CD8-positive, alpha-beta T cell (primary cell): ENCODE measurements at regions of chr3 and their contacts with region 1.

Region 1: DNA sequence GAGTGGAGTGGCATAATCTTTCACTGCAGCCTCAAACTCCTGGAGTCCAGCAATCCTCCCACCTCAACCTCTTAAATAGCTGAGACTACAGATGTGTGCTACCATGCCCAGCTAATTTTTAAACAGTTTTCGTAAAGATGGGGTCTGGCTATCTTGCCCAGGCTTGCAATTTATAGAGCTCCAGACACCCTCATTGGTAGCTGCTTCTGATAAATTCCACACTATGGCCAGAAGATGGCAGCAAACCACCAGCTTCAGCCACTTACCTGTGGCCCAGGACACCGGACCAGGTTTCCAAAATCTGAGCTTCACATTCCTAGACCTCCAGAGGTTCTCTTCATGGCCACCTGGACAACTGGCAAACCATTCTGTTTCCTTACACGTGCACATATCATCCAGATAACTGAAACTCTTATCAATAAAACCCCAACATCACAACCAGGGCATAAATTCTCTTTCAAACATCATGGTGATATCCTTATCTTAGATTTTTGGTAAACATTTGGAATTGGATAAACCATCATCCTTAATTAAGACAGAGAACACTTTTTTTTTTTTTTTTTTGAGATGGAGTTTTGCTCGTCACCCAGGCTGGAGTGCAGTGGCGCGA is 28.9 kb downstream of the FBXW12 start:
- DNase-seq: peak; percentile 29 to 87 (median 64)
- ATAC-seq: peak; percentile 90
- H3K4me3 ChIP-seq: no peak overlapping the region
- H3K4me3 Mint-ChIP-seq: no peak overlapping the region
- H3K27ac ChIP-seq: no peak overlapping the region
- H3K27ac Mint-ChIP-seq: no peak overlapping the region
- H3K4me1 ChIP-seq: no peaks in the 10 kb centered on the region
- H3K4me1 Mint-ChIP-seq: no peaks in the 10 kb centered on the region
- H3K27me3 ChIP-seq: no peaks in the 10 kb centered on the region
- H3K27me3 Mint-ChIP-seq: peaks cover 3% of the 10 kb centered on the region
- CTCF ChIP-seq: peak; percentile 87

Region 2: GRCh38 chr3:47433796-47434195 is 967.1 kb before region 1 on chr3:
- CTCF ChIA-PET with region 1: no interaction called
- POLR2A ChIA-PET with region 1: no interaction called
- intact Hi-C with region 1: no loop called
- DNase-seq: no peak
- ATAC-seq: no peak
- H3K4me3 ChIP-seq: no peak overlapping the region
- H3K4me3 Mint-ChIP-seq: no peak overlapping the region
- H3K27ac ChIP-seq: no peak overlapping the region
- H3K27ac Mint-ChIP-seq: no peak overlapping the region
- H3K4me1 ChIP-seq: no peaks in the 10 kb centered on the region
- H3K4me1 Mint-ChIP-seq: no peaks in the 10 kb centered on the region
- H3K27me3 ChIP-seq: no peaks in the 10 kb centered on the region
- H3K27me3 Mint-ChIP-seq: no peaks in the 10 kb centered on the region
- CTCF ChIP-seq: no peak

Region 3: DNA sequence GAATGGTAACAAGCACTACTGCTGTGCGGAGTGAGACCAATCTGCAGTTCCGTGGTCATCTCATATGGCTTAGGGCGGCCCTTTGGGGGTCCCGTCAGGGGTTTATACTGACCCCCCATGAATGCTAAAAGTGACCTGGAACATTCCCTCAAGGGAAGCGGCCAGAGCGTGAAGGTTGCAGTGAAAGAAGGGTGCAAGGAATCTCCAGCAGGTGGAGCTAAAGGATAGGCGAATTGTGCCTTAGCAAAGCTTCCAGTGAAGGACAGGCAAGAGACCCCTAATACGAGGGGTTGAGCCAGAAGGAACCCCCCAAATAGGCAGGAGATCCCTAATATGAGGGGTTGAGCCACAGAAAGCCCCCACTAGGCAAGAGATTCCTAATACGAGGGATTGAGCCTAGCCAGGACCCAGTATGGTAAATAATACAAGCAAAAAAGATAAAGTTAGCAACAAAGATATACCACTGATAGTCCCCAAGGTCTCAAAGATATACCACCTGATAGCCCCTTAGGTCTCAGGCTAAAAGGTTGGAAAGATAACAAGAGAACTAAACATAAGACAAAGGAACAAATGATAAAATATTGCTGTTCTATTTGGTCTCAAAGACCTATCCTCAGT is 127.2 kb before region 1 on chr3:
- CTCF ChIA-PET with region 1: interaction called, 14 read pairs
- POLR2A ChIA-PET with region 1: no interaction called
- intact Hi-C with region 1: loop called (anchors 1 kb)
- DNase-seq: peak in 8 of 9 experiments; percentile 5 to 78 (median 58)
- ATAC-seq: peak; percentile 50
- H3K4me3 ChIP-seq: no peak overlapping the region
- H3K4me3 Mint-ChIP-seq: no peak overlapping the region
- H3K27ac ChIP-seq: no peak overlapping the region
- H3K27ac Mint-ChIP-seq: no peak overlapping the region
- H3K4me1 ChIP-seq: peaks cover 7% of the 10 kb centered on the region
- H3K4me1 Mint-ChIP-seq: peaks cover 20% of the 10 kb centered on the region
- H3K27me3 ChIP-seq: no peaks in the 10 kb centered on the region
- H3K27me3 Mint-ChIP-seq: no peaks in the 10 kb centered on the region
- CTCF ChIP-seq: peak; percentile 75

Region 4: GRCh38 chr3:48415554-48415953 is 14.6 kb after region 1 on chr3:
- CTCF ChIA-PET with region 1: interaction called, 22 read pairs
- POLR2A ChIA-PET with region 1: no interaction called
- intact Hi-C with region 1: no loop called
- DNase-seq: no peak
- ATAC-seq: no peak
- H3K4me3 ChIP-seq: no peak overlapping the region
- H3K4me3 Mint-ChIP-seq: no peak overlapping the region
- H3K27ac ChIP-seq: no peak overlapping the region
- H3K27ac Mint-ChIP-seq: no peak overlapping the region
- H3K4me1 ChIP-seq: no peaks in the 10 kb centered on the region
- H3K4me1 Mint-ChIP-seq: no peaks in the 10 kb centered on the region
- H3K27me3 ChIP-seq: no peaks in the 10 kb centered on the region
- H3K27me3 Mint-ChIP-seq: no peaks in the 10 kb centered on the region
- CTCF ChIP-seq: no peak

Region 5: GRCh38 chr3:48472915-48473616 is 72.1 kb after region 1 on chr3:
- CTCF ChIA-PET with region 1: interaction called, 14 read pairs
- POLR2A ChIA-PET with region 1: no interaction called
- intact Hi-C with region 1: no loop called
- DNase-seq: peak; percentile 85 to 99 (median 92)
- ATAC-seq: peak; percentile 87
- H3K4me3 ChIP-seq: peak overlapping the region; percentile 62 to 65
- H3K4me3 Mint-ChIP-seq: peak overlapping the region; percentile 90
- H3K27ac ChIP-seq: peak overlapping the region; percentile 82 to 92
- H3K27ac Mint-ChIP-seq: peak overlapping the region; percentile 99
- H3K4me1 ChIP-seq: peaks cover 55% of the 10 kb centered on the region
- H3K4me1 Mint-ChIP-seq: peaks cover 56% of the 10 kb centered on the region
- H3K27me3 ChIP-seq: no peaks in the 10 kb centered on the region
- H3K27me3 Mint-ChIP-seq: no peaks in the 10 kb centered on the region
- CTCF ChIP-seq: no peak

Region 6: DNA sequence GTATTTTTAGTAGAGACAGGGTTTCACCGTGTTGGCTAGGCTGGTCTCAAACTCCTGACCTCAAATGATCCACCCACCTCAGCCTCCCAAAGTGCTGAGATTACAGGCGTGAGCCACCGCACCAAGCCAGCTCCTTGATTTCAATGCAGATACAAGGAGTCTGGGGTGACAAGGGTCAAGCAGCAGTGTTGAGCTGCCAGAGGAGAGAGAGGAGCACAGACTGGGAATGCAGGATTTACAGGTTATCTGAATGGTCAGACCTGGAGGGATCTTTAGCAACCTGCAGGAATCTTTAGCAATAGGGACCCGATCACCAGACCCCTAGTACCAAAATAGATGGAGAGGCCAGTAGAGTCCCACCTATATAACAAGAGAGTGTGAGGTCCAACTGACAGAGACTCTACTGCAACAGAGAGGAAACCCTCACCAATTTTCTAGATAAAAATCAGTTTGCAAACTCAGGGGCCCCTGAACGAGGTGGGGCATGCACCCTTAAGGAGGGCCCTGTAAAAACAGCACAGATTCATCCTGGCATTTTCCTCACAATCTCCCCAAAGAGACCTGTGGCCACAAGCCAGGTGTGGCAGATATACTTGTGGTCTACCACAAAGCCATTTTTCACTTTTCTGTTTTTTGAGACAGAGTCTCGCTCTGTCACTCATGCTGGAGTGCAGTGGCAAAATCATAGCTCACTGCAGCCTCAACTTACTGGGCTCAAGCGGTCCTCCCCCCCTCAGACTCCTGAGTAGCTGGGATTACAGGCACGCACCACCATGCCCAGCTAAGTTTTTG is 113.7 kb after region 1 on chr3:
- CTCF ChIA-PET with region 1: interaction called, 60 read pairs
- POLR2A ChIA-PET with region 1: no interaction called
- intact Hi-C with region 1: no loop called
- DNase-seq: peak in 6 of 9 experiments; percentile 28 to 67 (median 42)
- ATAC-seq: peak; percentile 40
- H3K4me3 ChIP-seq: peak overlapping the region in 1 of 2 experiments; percentile 13
- H3K4me3 Mint-ChIP-seq: peak overlapping the region; percentile 63
- H3K27ac ChIP-seq: no peak overlapping the region
- H3K27ac Mint-ChIP-seq: peak overlapping the region; percentile 62
- H3K4me1 ChIP-seq: peaks cover 59% of the 10 kb centered on the region
- H3K4me1 Mint-ChIP-seq: peaks cover 61% of the 10 kb centered on the region
- H3K27me3 ChIP-seq: no peaks in the 10 kb centered on the region
- H3K27me3 Mint-ChIP-seq: no peaks in the 10 kb centered on the region
- CTCF ChIP-seq: no peak

Region 7: GRCh38 chr3:48609088-48610005 is 208.4 kb after region 1 on chr3 and contains the start of gene UQCRC1:
- CTCF ChIA-PET with region 1: interaction called, 5 read pairs
- POLR2A ChIA-PET with region 1: no interaction called
- intact Hi-C with region 1: loop called (anchors 1 kb)
- DNase-seq: peak; percentile 82 to 96 (median 90)
- ATAC-seq: peak; percentile 99
- H3K4me3 ChIP-seq: peak within 1 kb of the TSS; percentile 78 to 99
- H3K4me3 Mint-ChIP-seq: peak within 1 kb of the TSS; percentile 99
- H3K27ac ChIP-seq: peak within 1 kb of the TSS; percentile 68 to 87
- H3K27ac Mint-ChIP-seq: peak within 1 kb of the TSS; percentile 98
- H3K4me1 ChIP-seq: peaks cover 15% of the 10 kb centered on the region
- H3K4me1 Mint-ChIP-seq: peaks cover 16% of the 10 kb centered on the region
- H3K27me3 ChIP-seq: no peaks in the 10 kb centered on the region
- H3K27me3 Mint-ChIP-seq: no peaks in the 10 kb centered on the region
- CTCF ChIP-seq: peak; percentile 78
- total RNA-seq, gene UQCRC1: 84.2 to 92.5 TPM

Region 8: DNA sequence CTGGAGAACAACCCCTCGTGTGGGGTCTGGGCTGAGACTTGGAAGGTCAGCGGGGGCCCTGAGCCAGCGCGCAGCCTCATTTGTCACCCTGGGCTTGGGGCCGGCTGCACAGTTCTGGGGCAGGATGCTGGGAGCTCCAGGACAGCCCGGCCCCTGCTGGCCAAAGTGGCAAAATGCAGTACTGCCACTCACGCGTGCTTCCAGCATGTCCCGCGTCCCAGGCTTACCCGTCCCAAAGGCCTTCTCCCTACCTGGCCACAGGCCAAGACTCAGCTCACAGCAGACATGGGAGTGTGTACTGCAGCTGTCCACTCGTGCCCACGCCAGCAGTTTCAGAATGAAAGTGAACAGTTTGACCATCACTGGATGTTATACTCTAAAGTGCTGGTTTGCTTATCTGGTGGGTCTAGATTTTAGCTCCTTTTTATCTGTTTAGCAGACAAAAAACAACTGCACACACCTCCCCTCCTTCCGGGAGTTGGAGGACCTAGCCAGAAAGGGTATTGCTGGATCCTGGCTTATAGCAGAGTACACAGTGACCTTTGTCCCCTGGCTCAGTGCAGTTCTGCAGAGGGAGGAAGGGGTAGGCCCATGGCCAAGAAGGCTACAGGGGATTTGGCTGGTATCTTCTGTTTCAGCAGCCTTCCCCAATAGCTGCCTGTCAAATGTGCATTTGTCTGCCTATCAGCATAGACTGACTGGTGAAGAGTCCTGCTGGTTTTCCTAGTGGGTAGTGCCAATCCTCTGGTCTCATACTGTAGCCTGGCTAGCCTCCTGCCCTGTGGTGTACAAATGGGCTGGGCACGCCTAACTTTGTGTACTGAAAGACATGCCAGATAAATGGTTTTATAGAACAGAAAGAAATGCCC is 339.3 kb after region 1 on chr3:
- CTCF ChIA-PET with region 1: no interaction called
- POLR2A ChIA-PET with region 1: no interaction called
- intact Hi-C with region 1: loop called in 1 of 2 experiments (anchors 2 kb)
- DNase-seq: peak; percentile 9 to 66 (median 54)
- ATAC-seq: peak; percentile 86
- H3K4me3 ChIP-seq: no peak overlapping the region
- H3K4me3 Mint-ChIP-seq: no peak overlapping the region
- H3K27ac ChIP-seq: no peak overlapping the region
- H3K27ac Mint-ChIP-seq: no peak overlapping the region
- H3K4me1 ChIP-seq: peaks cover 3% of the 10 kb centered on the region
- H3K4me1 Mint-ChIP-seq: peaks cover 2% of the 10 kb centered on the region
- H3K27me3 ChIP-seq: no peaks in the 10 kb centered on the region
- H3K27me3 Mint-ChIP-seq: no peaks in the 10 kb centered on the region
- CTCF ChIP-seq: peak; percentile 60